HCT116 (cell line): ENCODE measurements at regions of chr14 and their contacts with region 1.

Region 1: GRCh38 chr14:36941783-36942521 is 230.5 kb downstream of the SLC25A21 start:
- DNase-seq: peak; percentile 60
- ATAC-seq: peak; percentile 93
- H3K4me3 ChIP-seq: no peak overlapping the region; a peak in 1 of 4 replicates
- H3K27ac ChIP-seq: no peak overlapping the region
- H3K4me1 ChIP-seq: peaks cover 0 to 4% of the 10 kb centered on the region in 2 experiments; a peak in 1 of 4 replicates
- H3K27me3 ChIP-seq: no peaks in the 10 kb centered on the region
- CTCF ChIP-seq: peak; percentile 84 to 97 (median 96)
- POLR2A ChIP-seq: no peak
- RAD21 ChIP-seq: peak; percentile 82

Region 2: GRCh38 chr14:36647824-36648753 is 293.9 kb before region 1 on chr14:
- CTCF ChIA-PET with region 1: interaction called, 8 read pairs
- POLR2A ChIA-PET with region 1: no interaction called
- RAD21 ChIA-PET with region 1: no interaction called
- intact Hi-C with region 1: loop called (anchors 2 kb)
- DNase-seq: no peak
- ATAC-seq: peak; percentile 83
- H3K4me3 ChIP-seq: no peak overlapping the region
- H3K27ac ChIP-seq: no peak overlapping the region
- H3K4me1 ChIP-seq: peaks cover 0 to 4% of the 10 kb centered on the region in 2 experiments; a peak in 2 of 4 replicates
- H3K27me3 ChIP-seq: no peaks in the 10 kb centered on the region
- CTCF ChIP-seq: peak; percentile 21 to 41 (median 36); a peak in 4 of 6 replicates
- POLR2A ChIP-seq: no peak
- RAD21 ChIP-seq: peak; percentile 55

Region 3: DNA sequence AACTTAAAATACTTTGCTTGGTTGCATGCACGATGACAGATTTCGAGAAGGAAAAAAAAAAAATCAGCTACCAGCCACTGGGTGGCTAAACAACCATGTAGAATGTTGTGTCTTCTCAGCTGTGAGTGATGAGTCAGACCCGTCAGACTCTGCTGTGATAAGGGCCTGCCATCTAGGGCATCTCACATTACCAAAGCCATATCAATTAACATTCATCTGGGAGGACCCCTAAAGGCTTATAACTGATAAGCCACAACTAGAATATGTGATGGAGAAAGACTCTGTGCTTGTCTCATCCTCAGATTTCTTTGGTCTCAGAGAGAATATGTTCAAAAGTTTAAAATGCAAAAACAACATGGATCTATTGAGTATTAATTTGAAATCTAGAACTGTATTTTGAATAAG is 168.8 kb before region 1 on chr14:
- CTCF ChIA-PET with region 1: interaction called, 23 read pairs
- POLR2A ChIA-PET with region 1: no interaction called
- RAD21 ChIA-PET with region 1: no interaction called
- intact Hi-C with region 1: loop called (anchors 5 kb)
- DNase-seq: peak; percentile 33
- ATAC-seq: peak; percentile 93
- H3K4me3 ChIP-seq: no peak overlapping the region
- H3K27ac ChIP-seq: no peak overlapping the region
- H3K4me1 ChIP-seq: peaks cover 3 to 6% of the 10 kb centered on the region in 2 experiments; a peak in 2 of 4 replicates
- H3K27me3 ChIP-seq: no peaks in the 10 kb centered on the region
- CTCF ChIP-seq: peak; percentile 19 to 59 (median 43); a peak in 4 of 6 replicates
- POLR2A ChIP-seq: no peak
- RAD21 ChIP-seq: peak; percentile 43

Region 4: GRCh38 chr14:36952717-36953116 is 10.8 kb after region 1 on chr14:
- CTCF ChIA-PET with region 1: interaction called, 10 read pairs
- POLR2A ChIA-PET with region 1: no interaction called
- RAD21 ChIA-PET with region 1: no interaction called
- intact Hi-C with region 1: no loop called
- DNase-seq: peak; percentile 34
- ATAC-seq: peak; percentile 71
- H3K4me3 ChIP-seq: no peak overlapping the region
- H3K27ac ChIP-seq: no peak overlapping the region
- H3K4me1 ChIP-seq: peaks cover 0 to 16% of the 10 kb centered on the region in 2 experiments; a peak in 2 of 4 replicates
- H3K27me3 ChIP-seq: no peaks in the 10 kb centered on the region
- CTCF ChIP-seq: no peak
- POLR2A ChIP-seq: no peak
- RAD21 ChIP-seq: no peak

Region 5: DNA sequence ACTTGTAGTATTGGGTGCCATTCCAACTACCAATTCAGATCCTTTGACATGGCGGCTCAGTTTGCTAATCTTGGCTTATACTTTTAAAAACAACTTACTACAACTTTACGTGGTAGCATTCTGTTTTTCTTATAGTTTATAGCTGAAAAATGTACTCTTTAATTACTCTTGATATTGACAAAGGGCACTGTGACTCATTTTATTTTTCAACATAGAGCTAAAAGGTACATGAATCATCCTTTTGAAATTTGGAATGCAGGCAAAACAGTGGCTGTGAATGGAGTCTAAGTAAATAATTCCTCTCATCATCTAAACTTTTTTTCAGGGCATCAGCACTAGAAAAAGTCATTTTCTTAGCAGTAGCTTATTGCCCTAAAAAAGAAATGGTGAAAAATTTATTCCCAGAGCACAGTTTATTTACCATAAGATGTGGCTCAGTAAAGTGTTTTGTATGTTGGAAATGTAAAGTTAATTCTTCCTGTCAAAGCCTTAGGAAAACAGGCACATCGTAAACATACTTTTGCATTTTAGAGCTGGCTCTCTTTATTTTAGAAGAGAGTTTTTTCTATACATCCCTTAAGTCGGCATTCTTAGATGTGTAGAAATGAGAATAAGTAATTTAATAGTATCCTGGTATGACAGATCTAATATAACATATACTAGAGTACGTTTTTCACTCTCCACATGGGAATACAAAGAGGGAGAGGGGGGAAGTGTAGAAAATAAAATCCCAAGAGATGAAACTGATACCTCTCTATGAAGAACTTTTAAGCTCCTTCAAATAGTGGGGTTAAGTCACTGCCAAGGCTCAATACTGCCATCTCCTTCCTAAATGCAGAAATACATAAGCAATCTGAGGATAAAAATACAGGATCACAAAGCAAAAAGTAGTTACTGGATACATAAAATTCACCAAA is 175.2 kb after region 1 on chr14:
- CTCF ChIA-PET with region 1: interaction called, 22 read pairs
- POLR2A ChIA-PET with region 1: no interaction called
- RAD21 ChIA-PET with region 1: no interaction called
- intact Hi-C with region 1: no loop called
- DNase-seq: peak; percentile 6
- ATAC-seq: no peak; the same call in 1 of the 2 replicates
- H3K4me3 ChIP-seq: no peak overlapping the region
- H3K27ac ChIP-seq: peak overlapping the region; percentile 41; the same call in 1 of the 2 replicates
- H3K4me1 ChIP-seq: peaks cover 4 to 14% of the 10 kb centered on the region in 2 experiments; a peak in 3 of 4 replicates
- H3K27me3 ChIP-seq: no peaks in the 10 kb centered on the region
- CTCF ChIP-seq: peak; percentile 19 to 48 (median 36); a peak in 4 of 6 replicates
- POLR2A ChIP-seq: no peak
- RAD21 ChIP-seq: peak; percentile 57

Region 6: DNA sequence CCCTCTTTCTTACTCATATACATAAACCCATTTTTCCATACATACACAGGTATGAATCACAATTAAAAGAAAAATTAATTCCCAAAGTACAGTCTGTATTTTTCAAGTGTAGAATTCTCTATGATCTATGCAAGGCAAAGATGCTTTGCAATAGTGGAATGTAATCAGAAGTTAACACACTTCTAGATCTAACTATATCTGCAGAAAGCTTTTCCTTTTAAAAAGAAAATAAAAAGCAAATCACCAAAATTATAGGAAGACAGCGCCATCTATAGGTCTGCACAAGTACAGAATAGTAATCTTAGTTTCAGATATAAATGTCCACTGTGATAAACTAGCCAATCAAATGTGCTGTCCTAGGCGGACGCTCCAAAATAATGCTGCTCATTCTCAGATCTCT is 208.5 kb after region 1 on chr14:
- CTCF ChIA-PET with region 1: interaction called, 16 read pairs
- POLR2A ChIA-PET with region 1: no interaction called
- RAD21 ChIA-PET with region 1: interaction called in 1 of 2 experiments, 3 read pairs
- intact Hi-C with region 1: no loop called
- DNase-seq: no peak
- ATAC-seq: peak; percentile 91
- H3K4me3 ChIP-seq: no peak overlapping the region
- H3K27ac ChIP-seq: no peak overlapping the region
- H3K4me1 ChIP-seq: peaks cover 0 to 3% of the 10 kb centered on the region in 2 experiments; a peak in 1 of 4 replicates
- H3K27me3 ChIP-seq: no peaks in the 10 kb centered on the region
- CTCF ChIP-seq: peak; percentile 62 to 89 (median 69); a peak in 5 of 6 replicates
- POLR2A ChIP-seq: no peak
- RAD21 ChIP-seq: peak; percentile 68

Region 7: DNA sequence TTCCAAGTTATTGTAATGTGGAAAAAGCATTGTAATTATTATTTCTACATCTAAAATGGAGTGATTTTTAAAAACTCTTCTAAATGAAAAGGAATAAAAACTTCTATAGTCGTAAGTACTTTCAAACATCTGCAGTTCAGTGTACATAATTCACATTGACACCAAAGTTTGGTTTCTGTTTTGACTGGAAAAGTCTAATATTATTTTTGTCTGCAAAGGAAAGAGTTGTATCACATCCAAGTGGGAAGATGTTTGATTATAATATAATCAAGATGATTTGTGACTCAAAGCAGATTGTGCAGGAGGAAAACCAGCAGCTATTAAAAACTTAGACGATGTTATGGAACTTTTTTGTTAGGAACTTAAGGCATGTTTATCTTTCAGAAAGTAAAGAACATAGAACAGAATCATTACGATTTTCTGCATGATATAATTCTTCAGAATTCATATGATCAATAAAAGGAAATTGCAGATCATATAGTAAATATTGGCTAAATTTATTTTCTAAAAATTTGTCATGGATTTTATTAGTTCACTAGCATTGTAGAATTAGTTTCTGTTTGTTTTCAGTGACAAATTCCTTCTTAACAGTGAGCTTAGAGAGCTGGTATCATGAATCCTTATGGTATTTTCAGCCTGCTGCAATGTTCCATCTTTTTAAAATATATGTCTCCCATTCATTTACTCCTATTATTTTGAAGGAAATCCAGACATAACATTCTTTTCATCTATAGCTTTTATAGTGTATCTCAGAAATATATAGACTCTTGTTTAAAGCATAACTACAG is 401.5 kb after region 1 on chr14:
- CTCF ChIA-PET with region 1: no interaction called
- POLR2A ChIA-PET with region 1: no interaction called
- RAD21 ChIA-PET with region 1: no interaction called
- intact Hi-C with region 1: no loop called
- DNase-seq: no peak
- ATAC-seq: no peak
- H3K4me3 ChIP-seq: no peak overlapping the region
- H3K27ac ChIP-seq: no peak overlapping the region
- H3K4me1 ChIP-seq: peaks cover 0 to 5% of the 10 kb centered on the region in 2 experiments; a peak in 1 of 4 replicates
- H3K27me3 ChIP-seq: no peaks in the 10 kb centered on the region
- CTCF ChIP-seq: no peak
- POLR2A ChIP-seq: no peak
- RAD21 ChIP-seq: no peak